ENCODE measurements at regions of chr5 and their contacts with region 1.

Region 1: GRCh38 chr5:61162010-61162831 is at the start of gene SMIM15:
- DNase-seq: peak; percentile 94
- ATAC-seq: peak; percentile 98
- total RNA-seq, gene SMIM15: 24.1 TPM

Region 2: DNA sequence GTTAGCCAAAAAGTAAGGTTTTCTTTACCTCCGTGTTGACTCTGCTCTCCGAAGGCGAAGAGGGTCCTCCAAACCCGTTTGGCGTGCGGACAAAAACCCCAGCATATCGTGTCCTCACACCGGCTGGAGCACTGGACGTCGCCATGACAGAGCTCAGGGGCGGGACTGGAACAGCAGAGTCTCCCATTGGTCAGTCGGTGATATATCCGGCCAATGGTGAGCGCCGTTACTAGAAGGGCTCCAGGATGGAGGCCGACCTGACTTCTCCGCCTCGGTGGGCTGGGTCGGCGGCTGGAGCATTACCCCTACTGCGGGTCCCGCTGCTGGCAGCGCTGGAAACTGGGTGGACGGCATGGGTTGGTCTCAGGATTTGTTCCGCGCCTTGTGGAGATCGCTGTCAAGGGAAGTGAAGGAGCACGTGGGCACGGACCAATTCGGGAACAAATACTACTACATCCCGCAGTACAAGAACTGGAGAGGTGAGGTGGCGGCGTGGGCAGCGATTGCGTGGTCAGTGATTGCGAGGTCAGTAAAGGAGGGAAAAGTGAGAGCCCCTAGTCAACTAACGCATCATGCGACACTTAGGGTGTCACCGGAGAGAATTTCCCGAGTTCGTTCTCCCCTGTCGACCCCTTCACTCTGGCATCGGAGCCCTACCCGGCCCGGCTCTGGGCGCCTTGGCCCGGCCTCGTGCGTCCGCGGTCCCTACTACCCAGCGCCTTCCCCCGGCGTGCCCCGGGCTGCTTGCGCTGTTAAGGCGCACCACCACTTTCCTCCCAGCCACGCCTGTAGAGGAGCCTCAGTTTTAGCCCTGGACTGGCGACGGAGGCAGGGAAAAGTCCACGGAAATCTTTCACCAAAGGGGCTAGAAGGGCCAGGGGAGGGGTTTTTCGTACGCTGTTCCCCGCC is 217.1 kb before region 1 on chr5 and contains the starts of genes ERCC8 and NDUFAF2:
- intact Hi-C with region 1: loop called (anchors 10 kb)
- DNase-seq: peak; percentile 93
- ATAC-seq: peak; percentile 99
- total RNA-seq, gene ERCC8: 4.2 TPM
- total RNA-seq, gene NDUFAF2: 42.6 TPM

Region 3: DNA sequence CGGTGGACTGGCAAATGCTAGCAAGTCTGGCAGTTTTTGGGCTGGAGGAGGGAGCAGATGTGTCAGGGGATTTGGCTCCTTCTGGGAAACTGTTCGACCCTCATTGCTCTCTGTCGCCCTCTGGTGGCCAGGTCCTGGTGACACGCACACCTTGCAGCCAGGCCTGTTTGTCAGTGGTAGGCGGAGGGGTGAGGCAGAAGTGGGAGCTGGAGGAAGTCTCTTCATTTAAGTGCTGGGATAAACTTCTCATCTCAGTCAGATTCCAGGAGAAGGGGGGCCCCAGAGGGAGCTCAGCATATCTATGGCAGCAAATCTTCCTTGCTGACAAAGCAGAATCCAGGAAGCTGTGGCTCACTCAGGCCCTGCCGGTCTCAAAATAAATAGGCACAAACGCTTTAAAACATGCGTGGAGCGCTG is 496.4 kb after region 1 on chr5:
- intact Hi-C with region 1: loop called (anchors 10 kb)
- DNase-seq: peak; percentile 90
- ATAC-seq: peak; percentile 82

Region 4: GRCh38 chr5:61933787-61934626 is 771.8 kb after region 1 on chr5:
- intact Hi-C with region 1: loop called (anchors 10 kb)
- DNase-seq: no peak
- ATAC-seq: no peak

Measured in Right ventricle myocardium inferior (tissue), 1 donor.